ENCODE measurements at regions of chr1 and their contacts with region 1.

Region 1: GRCh38 chr1:206583707-206584648 is 28.3 kb downstream of the EIF2D start:
- H3K4me3 ChIP-seq: no peak overlapping the region
- H3K27ac ChIP-seq: no peak overlapping the region
- H3K4me1 ChIP-seq: no peaks in the 10 kb centered on the region
- CTCF ChIP-seq: peak; percentile 79

Region 2: DNA sequence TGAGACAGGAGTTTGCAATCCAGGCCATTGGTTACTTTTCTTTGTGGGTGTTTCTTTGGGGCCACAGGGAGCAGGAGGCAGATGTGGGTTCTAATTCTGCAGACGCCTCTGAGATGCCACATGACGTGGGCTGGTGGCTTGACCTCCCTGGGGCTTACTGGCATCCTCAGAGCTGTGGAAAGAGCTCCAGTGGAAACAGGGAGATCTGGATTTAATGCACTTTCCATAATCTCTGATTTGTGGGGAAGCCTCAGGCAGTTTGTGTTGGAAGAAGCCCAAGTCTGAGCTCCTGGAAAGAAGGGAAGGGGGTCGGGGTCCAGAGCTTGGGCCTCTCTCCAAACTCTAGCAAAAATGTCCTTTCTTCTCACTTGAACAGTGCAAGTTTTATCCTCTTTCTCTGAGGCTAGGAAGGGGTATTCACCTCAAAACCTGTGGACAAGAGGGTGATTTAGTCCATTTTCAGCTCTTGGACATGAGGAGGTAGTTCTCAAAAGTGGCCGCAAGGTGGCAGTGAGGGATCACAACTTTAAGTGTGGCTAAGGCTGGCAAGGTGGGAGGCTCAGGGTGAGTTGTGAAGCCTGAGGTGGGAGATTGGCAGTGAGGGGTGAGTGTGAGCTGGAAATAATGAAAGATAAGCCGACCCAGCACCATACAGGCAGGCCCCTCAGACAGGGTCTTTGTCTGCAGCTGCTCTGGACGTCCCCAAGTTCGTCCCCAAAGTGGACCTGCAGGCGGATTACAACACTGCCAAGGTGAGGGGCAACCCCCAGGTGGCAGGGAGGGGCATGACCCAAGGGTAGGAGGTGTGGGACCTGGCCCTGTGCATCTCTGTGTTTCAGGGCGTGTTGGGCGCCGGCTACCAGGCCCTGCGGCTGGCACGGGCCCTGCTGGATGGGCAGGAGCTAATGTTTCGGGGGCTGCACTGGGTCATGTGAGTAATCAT is 104.5 kb before region 1 on chr1:
- CTCF ChIA-PET with region 1: interaction called, 19 read pairs
- POLR2A ChIA-PET with region 1: no interaction called
- H3K4me3 ChIP-seq: no peak overlapping the region
- H3K27ac ChIP-seq: no peak overlapping the region
- H3K4me1 ChIP-seq: no peaks in the 10 kb centered on the region
- CTCF ChIP-seq: peak; percentile 87

Region 3: DNA sequence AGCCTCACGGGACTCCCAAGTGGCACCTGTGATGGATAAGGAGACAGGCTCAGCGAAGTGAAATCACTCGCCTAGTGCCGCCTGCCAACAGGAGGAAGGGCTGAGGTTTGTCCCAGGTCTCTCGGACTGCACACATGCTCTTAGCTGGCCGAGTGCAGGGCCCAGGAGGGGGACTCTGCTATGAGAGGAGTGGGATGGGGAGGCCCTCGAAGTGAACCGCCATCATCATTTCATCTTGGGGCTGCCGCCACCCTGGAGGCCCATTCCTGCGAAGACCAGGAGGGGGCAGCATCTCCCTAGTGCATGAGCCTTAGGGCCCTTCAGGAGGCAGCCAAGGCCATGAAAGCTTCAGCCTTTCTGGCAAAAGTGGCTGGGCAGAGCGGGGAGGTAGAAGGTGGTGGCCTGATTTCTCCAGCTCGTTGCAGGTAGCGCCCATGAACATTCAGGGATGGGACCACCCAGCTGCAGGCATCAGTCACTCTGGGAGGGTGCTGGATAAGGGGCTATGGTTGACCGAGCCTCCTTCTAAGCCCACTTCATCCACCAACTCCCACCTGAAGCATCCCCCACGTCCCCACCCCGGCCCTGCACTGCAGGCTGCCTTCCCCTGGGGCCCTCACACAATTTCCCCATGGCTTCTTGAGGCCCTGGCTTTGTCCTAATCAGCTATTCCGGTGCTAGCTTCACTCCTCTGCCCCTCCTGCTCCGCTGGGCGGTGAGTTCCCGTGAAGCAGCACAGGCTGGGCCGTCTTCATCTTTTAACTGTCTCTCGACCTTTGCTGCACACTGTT is 93.8 kb before region 1 on chr1:
- CTCF ChIA-PET with region 1: interaction called, 115 read pairs
- POLR2A ChIA-PET with region 1: no interaction called
- H3K4me3 ChIP-seq: no peak overlapping the region
- H3K27ac ChIP-seq: no peak overlapping the region
- H3K4me1 ChIP-seq: 0 out of 2 replicates have a peak, but pooled peaks cover under 1% of the 10 kb centered on the region
- CTCF ChIP-seq: peak; percentile 94

Region 4: DNA sequence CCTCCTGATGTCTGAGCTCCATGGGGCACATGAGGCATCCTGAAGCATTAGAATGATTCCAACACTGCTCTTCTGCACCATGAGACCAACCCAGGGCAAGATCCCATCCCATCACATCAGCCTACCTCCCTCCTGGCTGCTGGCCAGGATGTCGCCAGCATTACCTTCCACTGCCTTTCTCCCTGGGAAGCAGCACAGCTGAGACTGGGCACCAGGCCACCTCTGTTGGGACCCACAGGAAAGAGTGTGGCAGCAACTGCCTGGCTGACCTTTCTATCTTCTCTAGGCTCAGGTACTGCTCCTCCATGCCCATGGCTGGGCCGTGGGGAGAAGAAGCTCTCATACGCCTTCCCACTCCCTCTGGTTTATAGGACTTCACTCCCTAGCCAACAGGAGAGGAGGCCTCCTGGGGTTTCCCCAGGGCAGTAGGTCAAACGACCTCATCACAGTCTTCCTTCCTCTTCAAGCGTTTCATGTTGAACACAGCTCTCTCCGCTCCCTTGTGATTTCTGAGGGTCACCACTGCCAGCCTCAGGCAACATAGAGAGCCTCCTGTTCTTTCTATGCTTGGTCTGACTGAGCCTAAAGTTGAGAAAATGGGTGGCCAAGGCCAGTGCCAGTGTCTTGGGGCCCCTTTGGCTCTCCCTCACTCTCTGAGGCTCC is 87.7 kb before region 1 on chr1:
- CTCF ChIA-PET with region 1: interaction called, 115 read pairs
- POLR2A ChIA-PET with region 1: no interaction called
- H3K4me3 ChIP-seq: no peak overlapping the region
- H3K27ac ChIP-seq: no peak overlapping the region
- H3K4me1 ChIP-seq: peaks cover 10% of the 10 kb centered on the region
- CTCF ChIP-seq: no peak

Region 5: DNA sequence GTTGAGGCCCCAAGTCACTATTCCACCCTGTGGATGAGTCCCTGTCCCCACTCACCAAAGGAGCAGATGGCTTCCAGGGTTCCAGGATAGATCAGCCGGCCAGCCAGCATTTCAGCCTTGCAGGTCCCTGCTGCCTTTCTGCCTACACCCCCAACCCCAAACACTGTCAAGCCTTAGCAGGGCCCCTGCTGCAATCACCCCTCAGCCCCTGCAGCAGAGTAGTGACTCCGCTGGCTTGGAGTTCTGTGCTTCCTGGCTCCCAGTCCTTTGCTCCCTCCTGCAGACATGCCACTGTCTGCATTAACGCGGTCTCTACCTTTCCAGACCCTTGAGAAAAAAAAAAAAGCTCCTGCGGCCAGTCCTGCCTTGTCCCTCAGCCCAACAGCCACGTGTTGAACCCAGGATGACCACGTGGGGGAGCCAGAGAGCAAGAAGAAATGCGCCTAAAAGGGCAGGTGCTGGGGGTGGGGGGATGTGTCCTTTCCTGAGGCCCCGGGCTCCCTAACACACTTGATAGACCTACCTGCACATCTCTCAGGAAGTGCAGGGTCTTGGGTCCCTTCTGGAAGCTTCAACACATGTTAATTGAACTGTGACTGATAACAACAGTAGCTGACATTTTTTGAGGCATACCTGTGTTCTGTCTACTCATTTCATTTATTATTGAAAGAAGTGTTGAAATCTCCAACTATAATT is 39.3 kb before region 1 on chr1:
- CTCF ChIA-PET with region 1: interaction called, 94 read pairs
- POLR2A ChIA-PET with region 1: no interaction called
- H3K4me3 ChIP-seq: no peak overlapping the region
- H3K27ac ChIP-seq: no peak overlapping the region
- H3K4me1 ChIP-seq: no peaks in the 10 kb centered on the region
- CTCF ChIP-seq: peak; percentile 52; the same call in 1 of the 2 replicates

Region 6: GRCh38 chr1:206556750-206557635 is 27.0 kb before region 1 on chr1:
- CTCF ChIA-PET with region 1: interaction called, 32 read pairs
- POLR2A ChIA-PET with region 1: no interaction called
- H3K4me3 ChIP-seq: peak overlapping the region; percentile 49
- H3K27ac ChIP-seq: peak overlapping the region; percentile 68
- H3K4me1 ChIP-seq: peaks cover 10% of the 10 kb centered on the region
- CTCF ChIP-seq: peak; percentile 61

Region 7: GRCh38 chr1:206563367-206564207 is 20.4 kb before region 1 on chr1:
- CTCF ChIA-PET with region 1: interaction called, 32 read pairs
- POLR2A ChIA-PET with region 1: no interaction called
- H3K4me3 ChIP-seq: no peak overlapping the region
- H3K27ac ChIP-seq: no peak overlapping the region
- H3K4me1 ChIP-seq: 0 out of 2 replicates have a peak, but pooled peaks cover 2% of the 10 kb centered on the region
- CTCF ChIP-seq: no peak

Region 8: GRCh38 chr1:206631085-206631509 is 47.1 kb after region 1 on chr1:
- CTCF ChIA-PET with region 1: no interaction called
- POLR2A ChIA-PET with region 1: no interaction called
- H3K4me3 ChIP-seq: no peak overlapping the region
- H3K27ac ChIP-seq: no peak overlapping the region
- H3K4me1 ChIP-seq: peaks cover 7% of the 10 kb centered on the region; the same call in 1 of the 2 replicates
- CTCF ChIP-seq: no peak; the same call in 1 of the 2 replicates

Region 9: DNA sequence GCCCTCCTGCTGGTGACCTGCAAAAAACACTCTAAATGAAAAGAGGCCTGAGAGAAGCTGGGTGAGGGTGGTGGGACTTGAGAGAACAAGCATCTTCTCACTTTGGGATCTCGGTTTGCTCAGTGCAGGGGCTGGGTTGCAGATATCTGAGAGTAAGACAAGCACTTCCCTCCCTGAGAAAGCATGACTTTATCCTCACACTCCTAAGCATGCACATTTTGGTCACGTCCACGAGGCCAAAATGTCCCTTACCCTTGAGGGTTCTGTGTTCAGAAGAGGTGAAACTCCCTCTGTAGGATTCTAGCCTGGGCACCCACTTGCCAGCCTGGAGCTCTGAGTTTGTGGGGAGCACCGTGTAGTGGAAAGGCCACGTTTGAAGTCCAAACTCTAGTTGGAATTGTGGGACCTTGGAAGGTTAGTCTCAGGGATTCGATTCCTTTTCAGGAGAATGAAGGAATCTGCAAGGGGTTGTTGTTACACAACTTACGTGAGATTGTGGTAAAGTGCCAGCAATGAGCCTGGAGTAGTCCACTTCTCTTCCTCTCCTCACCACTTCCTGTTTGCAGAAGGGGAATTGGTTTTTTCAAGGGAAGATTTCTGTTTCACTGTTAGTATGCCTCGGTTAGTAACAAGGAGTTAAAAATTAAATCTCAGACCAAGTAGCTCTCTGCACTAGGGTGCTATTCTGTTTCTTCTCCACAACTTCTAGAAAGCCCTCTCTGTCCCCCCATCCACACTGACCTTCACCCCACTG is 383.3 kb after region 1 on chr1:
- CTCF ChIA-PET with region 1: no interaction called
- POLR2A ChIA-PET with region 1: no interaction called
- H3K4me3 ChIP-seq: no peak overlapping the region
- H3K27ac ChIP-seq: no peak overlapping the region
- H3K4me1 ChIP-seq: no peaks in the 10 kb centered on the region
- CTCF ChIP-seq: no peak

Region 10: GRCh38 chr1:207268337-207268736 is 684.4 kb after region 1 on chr1:
- CTCF ChIA-PET with region 1: no interaction called
- POLR2A ChIA-PET with region 1: no interaction called
- H3K4me3 ChIP-seq: no peak overlapping the region
- H3K27ac ChIP-seq: no peak overlapping the region
- H3K4me1 ChIP-seq: no peaks in the 10 kb centered on the region
- CTCF ChIP-seq: no peak